Posterior vena cava (tissue), 2 donors: ENCODE measurements at regions of chr15 and their contacts with region 1.

Region 1: GRCh38 chr15:98904544-98904943 is 103.0 kb downstream of the PGPEP1L start:
- DNase-seq: no peak

Region 2: DNA sequence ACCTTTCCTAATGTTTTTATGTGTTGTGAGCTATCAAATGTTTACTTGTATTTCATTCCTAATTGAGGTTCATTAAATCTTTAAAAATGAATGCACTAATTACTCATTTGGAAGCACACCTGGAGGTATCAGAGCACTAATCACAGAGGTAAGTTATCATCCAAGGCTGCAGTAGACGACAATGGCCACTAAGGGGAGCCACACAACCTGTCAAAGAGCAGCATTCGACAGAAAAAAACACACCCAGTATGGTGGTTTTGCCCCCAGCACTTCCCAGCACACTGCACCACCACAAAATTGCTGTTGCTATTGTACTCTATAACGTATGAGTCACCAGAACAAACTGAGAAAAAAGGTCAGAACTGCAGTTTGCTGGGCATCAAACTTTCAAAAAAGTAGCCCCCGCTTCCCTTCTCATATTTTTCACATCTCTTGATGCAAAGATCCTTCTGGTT is 462.1 kb before region 1 on chr15:
- intact Hi-C with region 1: loop called in 1 of 2 experiments (anchors 10 kb)
- DNase-seq: no peak

Region 3: DNA sequence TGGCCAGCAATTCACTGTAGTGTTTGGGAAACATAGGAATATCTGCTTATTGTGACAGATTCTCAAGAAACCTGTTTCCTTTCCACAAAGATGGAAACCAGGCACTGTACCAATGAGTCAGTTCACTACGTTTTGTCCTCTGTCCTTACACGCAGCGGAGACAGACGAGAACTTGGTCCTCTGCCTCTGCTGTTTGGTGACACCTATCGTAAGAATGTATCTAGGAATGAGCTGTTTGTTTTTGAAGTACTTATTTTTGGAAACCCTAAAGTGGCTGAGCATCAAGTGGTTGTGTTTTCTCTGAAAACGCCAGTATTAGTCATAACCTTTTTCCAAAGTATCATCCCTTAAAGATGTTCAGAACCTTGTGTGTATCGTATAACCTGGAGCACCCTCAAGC is 10.1 kb after region 1 on chr15:
- intact Hi-C with region 1: loop called in 1 of 2 experiments (anchors 1 kb)
- DNase-seq: no peak

Region 4: DNA sequence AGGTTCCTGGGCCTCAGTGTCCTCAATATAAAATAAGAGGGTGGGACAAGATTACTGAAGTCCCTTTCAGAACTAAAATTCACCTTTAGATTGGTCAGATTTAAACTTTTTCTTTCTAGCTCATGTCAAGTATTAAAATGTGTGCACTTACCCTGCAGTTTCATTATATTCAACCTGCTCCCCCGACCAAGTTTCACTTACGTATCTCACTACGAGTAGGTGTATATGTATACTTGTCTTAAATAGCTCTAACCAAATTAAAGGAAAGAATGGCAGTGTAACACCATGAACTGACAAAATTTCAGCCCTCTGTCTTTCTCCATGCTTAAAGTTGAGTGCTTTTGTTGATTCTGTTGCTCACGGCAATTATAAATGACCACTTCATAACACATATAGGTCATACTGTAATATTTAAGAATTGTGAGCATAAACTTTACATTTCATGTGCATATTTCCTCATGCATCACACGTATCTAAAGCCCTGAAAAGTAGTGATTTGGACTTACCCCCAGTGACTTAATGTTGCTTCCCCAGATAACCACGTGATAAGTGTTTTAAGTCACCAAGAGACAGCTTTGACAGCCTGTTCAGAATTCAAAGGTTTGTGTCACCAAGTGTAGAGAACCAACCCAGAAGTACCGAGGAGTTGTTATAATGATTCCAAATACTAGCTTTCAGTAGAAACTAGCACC is 33.0 kb after region 1 on chr15:
- intact Hi-C with region 1: loop called in 1 of 2 experiments (anchors 1 kb)
- DNase-seq: no peak

Region 5: DNA sequence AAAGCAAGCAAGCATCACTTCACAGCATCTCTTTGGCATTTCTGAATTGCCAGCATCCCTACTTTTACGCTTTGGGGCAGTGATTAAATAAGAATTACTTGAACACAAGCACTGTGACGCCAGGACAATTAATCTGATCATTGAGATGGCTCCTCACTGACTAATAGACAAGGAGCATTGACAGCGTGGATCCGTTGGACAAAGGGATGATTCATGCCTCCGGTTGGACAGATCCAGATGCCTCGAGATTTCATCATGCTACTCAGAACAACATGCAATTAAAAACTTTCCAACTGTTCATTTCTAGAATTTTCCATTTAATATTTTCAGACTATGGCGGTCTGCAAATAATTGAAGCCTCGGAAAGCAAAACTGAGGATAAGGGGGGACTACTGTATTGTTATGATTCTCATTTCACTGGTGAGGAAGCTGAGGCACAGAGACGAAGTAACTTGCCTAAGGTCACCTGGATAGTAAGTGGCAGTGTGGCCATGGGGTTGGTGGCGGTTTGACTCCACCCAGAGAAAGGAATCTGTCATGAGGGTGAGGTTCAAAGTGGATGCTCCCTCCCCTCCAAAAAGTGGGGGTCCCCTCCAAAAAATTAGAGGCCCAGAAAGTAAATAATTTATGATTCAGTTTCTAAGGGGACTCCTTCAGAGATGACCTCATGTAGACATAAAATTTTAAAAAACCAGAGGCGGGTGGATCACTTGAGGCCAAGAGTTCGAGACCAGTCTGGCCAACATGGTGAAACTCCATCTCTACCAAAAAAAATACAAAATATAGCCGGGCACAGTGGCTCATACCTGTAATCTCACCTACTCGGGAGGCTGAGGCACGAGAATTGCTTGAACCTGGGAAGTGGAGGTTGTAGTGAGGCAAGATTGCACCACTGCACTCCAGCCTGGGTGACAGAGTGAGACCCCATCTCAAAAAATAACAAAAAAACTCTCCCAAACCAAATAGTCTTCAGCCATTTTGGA is 115.3 kb after region 1 on chr15:
- intact Hi-C with region 1: no loop called
- DNase-seq: no peak

Region 6: GRCh38 chr15:99507504-99508310 is 603.2 kb after region 1 on chr15:
- intact Hi-C with region 1: no loop called
- DNase-seq: peak; percentile 91